Right ventricle myocardium superior (tissue), 1 donor: ENCODE measurements at regions of chr19 and their contacts with region 1.

Region 1: DNA sequence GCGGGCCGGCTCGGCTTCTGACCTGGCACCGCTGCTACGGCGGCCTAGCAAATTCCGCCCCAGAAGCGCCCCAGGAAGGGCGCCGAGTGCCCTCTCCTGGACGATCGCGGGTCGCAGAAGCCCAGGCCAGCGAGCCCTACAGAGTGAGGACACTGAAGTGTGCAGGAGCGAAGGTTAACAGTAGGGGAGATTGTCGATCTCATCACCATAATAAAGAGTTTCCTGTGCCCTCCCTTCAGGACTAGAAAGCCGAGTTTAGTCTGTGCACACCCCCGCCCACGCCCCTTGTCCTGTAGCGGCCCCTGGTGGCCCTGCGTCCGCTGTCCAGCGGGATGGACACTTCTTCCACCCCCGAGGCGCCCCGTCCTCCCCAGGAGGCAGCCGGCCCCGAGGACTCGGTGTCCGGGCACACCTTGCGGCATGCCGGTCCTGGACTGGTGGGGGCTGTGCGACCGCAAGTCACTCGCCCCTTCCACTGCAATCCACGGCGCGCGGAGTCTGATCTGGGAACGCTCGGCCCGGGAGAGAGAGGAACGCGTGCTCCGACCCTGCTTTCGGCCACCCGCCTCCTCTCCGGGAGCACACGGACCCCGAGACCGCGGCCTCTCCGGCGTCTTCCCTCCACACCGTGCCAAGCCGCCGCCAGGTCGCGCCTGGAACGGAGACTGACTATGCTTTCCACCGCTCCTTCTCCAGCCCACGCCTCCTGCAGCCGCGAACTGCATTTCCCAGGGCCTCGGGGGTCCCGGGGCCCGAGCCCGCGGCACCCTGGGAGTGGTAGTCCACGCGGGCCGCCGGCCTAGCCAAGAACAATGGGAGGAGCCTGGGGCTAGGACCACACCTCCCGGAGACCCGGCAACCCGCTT is 769 bp upstream of the KMT2B start:
- DNase-seq: peak; percentile 97
- ATAC-seq: peak; percentile 95

Region 2: DNA sequence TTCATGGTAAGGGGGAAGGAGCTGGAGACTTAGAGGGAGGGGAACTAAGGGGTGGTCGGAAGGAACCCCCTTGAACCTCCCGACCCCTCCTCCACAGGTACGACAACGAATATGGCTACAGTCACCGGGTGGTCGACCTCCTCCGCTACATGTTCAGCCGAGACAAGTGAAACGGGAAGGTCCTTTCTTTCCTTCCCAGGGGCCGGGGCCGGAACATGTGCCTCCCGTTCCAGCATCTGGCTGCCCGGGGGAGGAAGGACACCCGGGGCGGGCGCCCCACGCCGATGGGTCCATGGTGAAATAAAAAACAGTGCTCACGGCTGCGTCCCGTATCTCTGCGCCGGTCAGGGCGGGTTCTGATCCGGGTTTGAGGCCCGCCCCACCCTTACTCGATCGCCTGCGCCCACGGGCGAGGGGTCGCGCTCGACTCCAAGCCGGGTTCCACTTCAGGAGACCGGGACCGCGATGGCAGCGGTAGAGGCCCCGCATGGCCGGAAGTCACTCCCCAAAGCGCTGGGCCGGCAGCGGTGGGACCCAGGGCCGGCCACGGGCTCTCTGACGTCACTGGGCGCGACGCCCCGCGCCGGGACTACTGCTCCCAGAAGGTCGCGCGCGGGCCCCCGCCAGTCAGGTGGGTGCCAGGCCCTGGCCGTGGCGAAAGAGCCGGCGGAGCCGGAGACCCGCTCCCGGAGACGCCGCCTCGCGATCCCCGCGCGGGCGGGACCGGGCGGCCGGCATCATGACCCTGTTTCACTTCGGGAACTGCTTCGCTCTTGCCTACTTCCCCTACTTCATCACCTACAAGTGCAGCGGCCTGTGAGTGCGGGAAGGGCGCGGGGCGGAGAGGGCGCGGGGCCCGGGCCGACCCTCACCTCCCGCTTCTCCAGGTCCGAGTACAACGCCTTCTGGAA is 171.8 kb before region 1 on chr19 and contains the start of gene TMEM147:
- intact Hi-C with region 1: loop called (anchors 10 kb)
- DNase-seq: peak; percentile 97
- ATAC-seq: peak; percentile 100
- total RNA-seq, gene TMEM147: 75.7 TPM

Region 3: DNA sequence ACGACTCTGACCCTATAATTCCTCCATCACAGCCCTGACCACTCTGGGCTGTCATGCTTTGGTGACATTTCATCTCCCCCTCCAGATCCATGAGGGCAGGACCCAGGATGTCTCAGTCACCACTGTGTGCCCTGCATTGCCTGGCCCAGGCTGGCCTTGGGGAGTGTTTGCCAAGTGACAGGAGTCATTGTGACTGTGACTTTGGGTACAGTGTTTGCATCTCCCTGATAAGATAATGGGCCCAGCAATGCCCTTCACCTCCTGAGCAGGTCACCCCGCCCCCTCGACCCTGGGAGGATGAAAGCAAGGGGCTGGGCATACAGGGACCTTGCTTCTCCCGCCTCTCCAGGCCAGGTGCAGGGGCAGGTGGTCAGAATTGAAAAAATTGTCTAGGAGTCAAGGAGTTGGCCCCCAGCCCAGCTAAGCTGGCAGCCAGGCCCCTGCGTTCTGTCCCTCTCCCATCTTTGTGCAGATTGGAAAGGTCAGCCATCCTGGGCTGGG is 147.7 kb before region 1 on chr19:
- intact Hi-C with region 1: no loop called
- DNase-seq: no peak
- ATAC-seq: no peak

Region 4: GRCh38 chr19:35693830-35694599 is 23.0 kb before region 1 on chr19:
- intact Hi-C with region 1: loop called (anchors 2 kb)
- DNase-seq: peak; percentile 91
- ATAC-seq: peak; percentile 99